Mammary epithelial cell (primary cell): ENCODE measurements at regions of chr4 and their contacts with region 1.

Region 1: GRCh38 chr4:83639849-83640493 is 104.1 kb downstream of the GPAT3 start:
- DNase-seq: peak; percentile 64
- H3K4me3 ChIP-seq: no peak overlapping the region
- H3K27ac ChIP-seq: no peak overlapping the region
- H3K4me1 ChIP-seq: no peaks in the 10 kb centered on the region
- H3K27me3 ChIP-seq: no peaks in the 10 kb centered on the region
- CTCF ChIP-seq: peak; percentile 77 to 81

Region 2: DNA sequence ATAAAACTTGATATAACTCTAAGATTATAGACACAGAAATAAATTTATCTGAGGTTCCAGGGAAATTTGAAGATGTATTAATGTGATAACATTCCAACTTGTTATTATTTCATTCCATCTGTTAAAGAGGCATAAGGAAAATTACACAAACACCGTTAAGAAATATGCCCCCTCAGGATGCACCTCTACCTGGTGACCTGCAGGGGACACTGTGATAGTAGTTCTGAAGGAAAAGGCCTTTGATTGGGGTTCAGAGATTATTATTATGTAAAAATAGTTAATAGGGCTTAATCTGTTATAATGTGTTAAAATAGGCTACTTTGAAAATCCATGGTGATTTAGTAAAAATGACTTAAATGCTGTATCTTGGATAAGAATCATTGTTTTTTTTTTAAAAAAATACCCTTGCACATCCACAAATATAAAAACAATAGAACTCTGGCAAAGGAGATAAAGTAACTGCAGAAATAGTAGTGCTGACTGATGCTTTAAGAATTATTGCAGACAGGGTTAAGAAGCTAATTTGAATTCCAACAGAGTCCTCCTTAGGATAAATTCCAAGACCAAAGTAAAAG is 149.0 kb before region 1 on chr4:
- CTCF ChIA-PET with region 1: no interaction called
- dilution Hi-C with region 1: no loop called
- in situ Hi-C with region 1: no loop called
- intact Hi-C with region 1: loop called (anchors 1 kb)
- DNase-seq: no peak
- H3K4me3 ChIP-seq: no peak overlapping the region
- H3K27ac ChIP-seq: no peak overlapping the region
- H3K4me1 ChIP-seq: no peaks in the 10 kb centered on the region
- H3K27me3 ChIP-seq: no peaks in the 10 kb centered on the region
- CTCF ChIP-seq: peak; percentile 84 to 94

Region 3: GRCh38 chr4:83503974-83504373 is 136.0 kb before region 1 on chr4:
- CTCF ChIA-PET with region 1: no interaction called
- dilution Hi-C with region 1: loop called (anchors 5 kb)
- in situ Hi-C with region 1: no loop called
- intact Hi-C with region 1: loop called (anchors 1 kb)
- DNase-seq: no peak
- H3K4me3 ChIP-seq: no peak overlapping the region
- H3K27ac ChIP-seq: no peak overlapping the region
- H3K4me1 ChIP-seq: no peaks in the 10 kb centered on the region
- H3K27me3 ChIP-seq: no peaks in the 10 kb centered on the region
- CTCF ChIP-seq: no peak

Region 4: DNA sequence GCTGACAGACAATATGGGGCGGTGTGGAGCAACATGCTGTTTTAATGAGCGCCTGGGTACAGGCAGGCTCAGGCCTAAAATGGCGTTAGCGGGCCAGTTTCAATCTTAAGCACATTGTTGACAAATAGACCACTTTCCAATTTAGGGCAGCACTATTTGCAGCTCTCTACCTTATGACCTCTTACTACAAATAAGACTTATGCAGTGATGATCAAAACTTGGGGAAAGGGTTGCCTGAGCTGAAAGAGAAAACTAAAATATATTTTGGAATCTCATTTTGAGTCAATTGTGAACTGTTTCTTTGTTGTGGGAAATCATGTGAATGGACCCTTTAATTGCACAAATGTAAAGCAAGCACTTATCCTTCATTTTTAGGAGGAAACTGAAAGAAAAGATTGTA is 129.5 kb before region 1 on chr4:
- CTCF ChIA-PET with region 1: no interaction called
- dilution Hi-C with region 1: no loop called
- in situ Hi-C with region 1: loop called (anchors 5 kb)
- intact Hi-C with region 1: loop called (anchors 1 kb)
- DNase-seq: no peak
- H3K4me3 ChIP-seq: no peak overlapping the region
- H3K27ac ChIP-seq: no peak overlapping the region
- H3K4me1 ChIP-seq: no peaks in the 10 kb centered on the region
- H3K27me3 ChIP-seq: no peaks in the 10 kb centered on the region
- CTCF ChIP-seq: no peak

Region 5: DNA sequence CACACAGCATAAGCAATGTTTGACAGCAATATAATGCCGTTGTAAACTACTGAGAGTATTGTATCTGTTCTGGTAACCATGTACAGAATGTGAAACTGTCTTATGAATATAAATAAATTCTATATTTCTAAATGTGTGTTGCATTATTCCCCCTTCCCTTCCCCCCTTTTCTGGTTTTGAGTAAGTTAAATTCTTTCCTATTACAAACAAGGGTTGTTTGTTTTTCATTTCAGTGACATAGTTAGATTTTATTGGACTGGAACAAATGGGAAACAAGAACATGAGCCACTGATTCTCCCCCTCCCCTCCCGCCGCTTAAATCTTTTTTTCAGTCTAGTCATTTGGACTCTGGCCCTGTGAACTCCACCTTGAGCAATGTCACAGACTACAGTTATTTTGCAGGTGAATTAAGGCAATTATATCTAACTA is 34.2 kb before region 1 on chr4:
- CTCF ChIA-PET with region 1: no interaction called
- dilution Hi-C with region 1: no loop called
- in situ Hi-C with region 1: no loop called
- intact Hi-C with region 1: no loop called
- DNase-seq: no peak
- H3K4me3 ChIP-seq: no peak overlapping the region
- H3K27ac ChIP-seq: no peak overlapping the region
- H3K4me1 ChIP-seq: no peaks in the 10 kb centered on the region
- H3K27me3 ChIP-seq: no peaks in the 10 kb centered on the region
- CTCF ChIP-seq: no peak

Region 6: DNA sequence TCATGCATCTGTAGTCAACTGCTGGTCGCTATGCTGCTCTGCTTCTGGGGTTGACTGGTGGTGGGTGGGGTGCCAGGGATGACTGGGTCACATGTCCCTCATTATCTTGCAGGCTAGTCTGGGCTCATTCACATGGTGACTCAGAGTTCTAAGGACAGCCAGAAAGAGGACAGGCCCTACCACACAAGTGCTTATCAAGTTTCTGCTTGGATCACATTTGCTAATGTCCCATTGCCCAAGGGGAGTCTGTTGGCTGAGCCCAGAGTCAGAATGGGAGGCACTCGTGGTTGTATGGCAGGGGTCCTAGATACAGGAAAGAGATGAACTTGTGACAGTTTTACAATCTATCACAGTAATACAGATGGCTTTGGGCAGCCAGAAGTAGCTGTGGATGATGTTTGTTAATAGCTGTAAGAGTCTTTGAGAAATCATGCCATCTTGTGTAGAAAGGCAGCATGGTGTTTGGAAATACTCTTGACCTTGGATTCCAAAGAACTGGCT is 117.2 kb after region 1 on chr4:
- CTCF ChIA-PET with region 1: no interaction called
- dilution Hi-C with region 1: no loop called
- in situ Hi-C with region 1: no loop called
- intact Hi-C with region 1: loop called (anchors 5 kb)
- DNase-seq: peak; percentile 64
- H3K4me3 ChIP-seq: no peak overlapping the region
- H3K27ac ChIP-seq: no peak overlapping the region
- H3K4me1 ChIP-seq: peaks cover 8% of the 10 kb centered on the region
- H3K27me3 ChIP-seq: no peaks in the 10 kb centered on the region
- CTCF ChIP-seq: no peak

Region 7: GRCh38 chr4:83771113-83771705 is 131.2 kb after region 1 on chr4:
- CTCF ChIA-PET with region 1: no interaction called
- dilution Hi-C with region 1: no loop called
- in situ Hi-C with region 1: no loop called
- intact Hi-C with region 1: loop called (anchors 2 kb)
- DNase-seq: peak; percentile 25
- H3K4me3 ChIP-seq: no peak overlapping the region
- H3K27ac ChIP-seq: no peak overlapping the region
- H3K4me1 ChIP-seq: no peaks in the 10 kb centered on the region
- H3K27me3 ChIP-seq: peaks cover 2% of the 10 kb centered on the region
- CTCF ChIP-seq: peak; percentile 74 to 80

Region 8: DNA sequence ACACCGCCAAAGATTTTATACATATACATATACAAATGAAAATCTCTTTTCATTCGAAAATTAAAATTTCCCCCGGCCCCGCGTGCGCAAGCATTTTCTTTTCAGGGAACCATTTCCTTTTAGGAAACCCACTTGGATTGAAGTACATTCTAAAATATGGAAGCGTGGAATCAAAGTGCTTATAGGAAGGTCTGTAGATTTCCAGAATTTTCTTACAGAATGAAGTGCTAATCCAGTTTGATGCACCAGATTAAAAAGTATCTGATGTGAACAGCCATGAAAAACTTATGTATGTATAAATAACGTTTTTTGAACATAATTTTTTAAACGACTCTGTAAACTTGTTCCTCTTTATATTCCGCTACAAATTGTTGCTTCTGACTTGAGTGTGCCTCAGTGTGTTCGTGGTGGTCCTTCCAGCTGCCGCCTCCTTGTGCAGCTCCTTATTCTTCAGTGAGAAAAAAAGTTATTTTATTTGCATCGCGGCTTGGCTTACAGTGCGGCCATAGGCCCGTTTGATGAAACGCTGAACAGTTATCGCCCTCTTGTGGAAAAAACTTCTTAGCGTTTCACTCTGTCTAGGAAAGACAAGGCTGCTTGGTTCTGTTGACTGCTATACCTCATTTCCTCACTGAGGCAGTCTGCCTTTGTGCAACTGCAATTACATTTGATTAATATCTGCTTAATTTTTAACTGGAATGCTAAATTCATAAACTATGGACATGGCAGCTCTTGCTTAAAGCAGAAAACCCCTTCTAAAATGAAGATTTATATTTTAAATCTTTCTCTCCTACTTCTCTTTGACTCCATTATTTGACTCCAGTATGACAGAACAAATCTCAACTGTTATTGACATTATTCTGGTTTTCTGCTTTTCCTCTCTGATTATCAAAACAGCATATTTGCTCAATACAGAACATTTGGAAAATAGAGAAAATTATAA is 863.8 kb after region 1 on chr4:
- CTCF ChIA-PET with region 1: no interaction called
- dilution Hi-C with region 1: no loop called
- in situ Hi-C with region 1: loop called in 1 of 2 experiments (anchors 25 kb)
- intact Hi-C with region 1: loop called (anchors 2 kb)
- DNase-seq: peak; percentile 52
- H3K4me3 ChIP-seq: no peak overlapping the region
- H3K27ac ChIP-seq: no peak overlapping the region
- H3K4me1 ChIP-seq: peaks cover 9% of the 10 kb centered on the region
- H3K27me3 ChIP-seq: peaks cover 44% of the 10 kb centered on the region
- CTCF ChIP-seq: peak; percentile 75 to 82